ENCODE measurements at regions of chr12 and their contacts with region 1.

Region 1: GRCh38 chr12:53365245-53365904 is 14.6 kb upstream of the SP1 start:
- DNase-seq: no peak
- H3K4me3 ChIP-seq: no peak overlapping the region
- H3K27ac ChIP-seq: peak overlapping the region; percentile 26 to 40
- H3K4me1 ChIP-seq: peaks cover 0 to 1% of the 10 kb centered on the region in 2 donors
- H3K27me3 ChIP-seq: no peaks in the 10 kb centered on the region
- CTCF ChIP-seq: no peak
- POLR2A ChIP-seq: no peak

Region 2: GRCh38 chr12:53907103-53907502 is 541.7 kb after region 1 on chr12:
- intact Hi-C with region 1: loop called (anchors 5 kb)
- DNase-seq: no peak
- H3K4me3 ChIP-seq: no peak overlapping the region
- H3K27ac ChIP-seq: no peak overlapping the region
- H3K4me1 ChIP-seq: no peaks in the 10 kb centered on the region
- H3K27me3 ChIP-seq: peaks cover 0 to under 1% of the 10 kb centered on the region in 2 donors
- CTCF ChIP-seq: no peak
- POLR2A ChIP-seq: no peak

Region 3: DNA sequence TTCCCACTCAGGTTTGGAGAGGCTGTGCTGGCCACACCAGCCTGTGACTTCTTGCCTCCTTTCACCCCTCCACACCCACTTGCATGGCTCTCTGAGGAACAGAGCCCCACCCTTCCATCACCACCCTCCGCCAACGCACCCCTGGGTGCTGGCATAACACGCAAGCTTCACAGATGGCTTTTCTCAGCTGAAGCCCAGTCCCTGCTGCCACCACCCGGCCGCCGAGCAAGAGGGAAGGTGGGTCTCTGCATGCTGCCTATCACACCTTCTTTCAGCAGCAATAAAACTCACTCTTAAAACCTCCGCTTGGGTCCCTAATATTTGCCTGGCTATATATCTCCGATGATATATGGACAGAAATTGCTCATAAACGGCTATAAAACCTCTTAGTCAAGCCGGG is 781.8 kb after region 1 on chr12:
- intact Hi-C with region 1: no loop called
- DNase-seq: no peak
- H3K4me3 ChIP-seq: no peak overlapping the region
- H3K27ac ChIP-seq: peak overlapping the region in 1 of 2 donors; percentile 52
- H3K4me1 ChIP-seq: no peaks in the 10 kb centered on the region
- H3K27me3 ChIP-seq: no peaks in the 10 kb centered on the region
- CTCF ChIP-seq: no peak
- POLR2A ChIP-seq: no peak

Measured in breast epithelium (tissue), 4 donors.